ENCODE measurements at regions of chr14 and their contacts with region 1.

Region 1: DNA sequence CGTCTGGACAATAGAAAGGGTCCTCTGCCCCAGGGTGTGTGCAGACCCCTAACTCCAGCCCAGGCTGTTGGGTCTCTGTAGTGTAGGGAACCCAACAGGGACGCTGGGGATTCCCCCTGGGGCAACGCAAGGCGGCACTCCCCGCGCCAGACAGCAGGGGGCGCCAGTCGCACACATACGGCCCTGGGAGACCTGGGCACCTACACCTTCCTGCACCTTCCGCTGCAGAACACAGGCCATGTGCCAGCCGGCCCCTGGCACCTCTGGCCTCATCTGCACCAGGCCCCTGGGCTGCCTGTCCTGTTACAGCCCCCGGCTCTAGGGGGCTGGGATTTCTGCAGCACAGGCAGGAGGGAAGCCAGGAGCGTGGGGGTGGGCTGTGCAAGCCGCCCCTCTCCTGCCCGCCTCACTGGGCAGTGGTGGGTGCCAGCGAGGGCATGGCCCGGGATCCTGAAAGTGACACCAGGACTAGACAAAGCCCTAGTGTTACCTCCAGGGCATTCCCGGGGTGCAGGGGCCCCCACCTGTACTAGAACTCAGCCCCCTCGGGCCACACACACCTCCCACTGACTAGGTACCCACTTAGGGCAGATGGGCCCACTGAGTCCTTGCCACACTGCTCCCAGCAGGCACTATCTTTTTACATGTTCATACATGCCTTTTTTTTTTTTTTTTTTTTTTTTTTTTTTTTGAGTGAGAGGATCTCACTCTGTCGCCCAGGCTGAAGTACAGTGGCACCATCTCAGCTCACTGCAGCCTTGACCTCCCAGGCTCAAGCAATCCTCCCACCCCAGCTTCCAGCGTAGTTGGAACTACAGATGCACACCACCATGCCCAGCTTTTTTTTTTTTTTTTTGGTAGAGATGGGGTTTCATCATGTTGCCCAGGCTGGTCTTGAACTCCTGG is 37.5 kb downstream of the CCNK start:
- DNase-seq: peak; percentile 60 to 91 (median 80)
- H3K4me3 ChIP-seq: no peak overlapping the region
- H3K27ac ChIP-seq: no peak overlapping the region
- H3K4me1 ChIP-seq: peaks cover 15 to 20% of the 10 kb centered on the region in 2 donors
- H3K27me3 ChIP-seq: no peaks in the 10 kb centered on the region
- CTCF ChIP-seq: peak; percentile 91 to 98 (median 97)
- POLR2A ChIP-seq: peak in 1 of 2 donors; percentile 21

Region 2: DNA sequence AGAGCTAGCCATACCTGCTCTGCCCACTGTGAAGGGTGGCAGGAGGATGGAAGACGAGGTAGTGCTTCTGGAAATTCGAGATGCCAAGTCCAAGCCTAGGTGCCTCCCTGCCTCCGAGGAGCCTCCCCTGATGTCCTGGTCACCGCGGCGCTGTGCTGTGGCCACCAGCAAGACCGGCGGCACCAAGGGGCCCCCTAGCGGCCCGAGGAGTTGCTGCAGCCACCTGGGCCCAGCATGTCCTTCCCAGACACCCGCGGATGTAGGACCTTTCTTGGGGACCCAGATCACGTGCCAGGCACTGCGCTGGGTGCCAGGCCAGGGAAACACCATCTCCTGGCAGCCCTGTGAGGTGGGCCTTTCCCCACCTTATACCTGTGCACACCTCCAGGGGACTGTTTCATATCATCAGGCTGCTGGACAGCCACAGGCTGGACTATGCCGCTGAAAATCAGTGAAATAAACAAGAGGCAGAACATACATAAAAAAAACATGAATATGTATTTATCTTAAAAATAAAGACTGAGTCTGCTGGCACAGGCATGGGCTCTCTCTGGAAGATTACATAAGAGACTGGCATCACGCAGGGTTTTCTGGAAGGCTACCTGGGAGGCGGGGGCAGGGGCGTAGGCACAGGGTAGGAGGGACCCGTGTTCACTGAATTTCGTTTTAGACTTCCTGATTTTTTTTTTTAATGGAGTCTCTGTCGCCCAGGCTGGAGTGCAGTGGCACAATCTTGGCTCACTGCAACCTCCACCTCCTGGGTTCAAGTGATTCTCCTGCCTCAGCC is 110.3 kb after region 1 on chr14:
- intact Hi-C with region 1: loop called (anchors 2 to 5 kb)
- DNase-seq: peak; percentile 67 to 91 (median 84)
- H3K4me3 ChIP-seq: no peak overlapping the region
- H3K27ac ChIP-seq: no peak overlapping the region
- H3K4me1 ChIP-seq: no peaks in the 10 kb centered on the region
- H3K27me3 ChIP-seq: no peaks in the 10 kb centered on the region
- CTCF ChIP-seq: peak; percentile 94 to 98 (median 97)
- POLR2A ChIP-seq: no peak

Measured in adrenal gland (tissue), 19 donors.